ENCODE measurements at regions of chr12 and their contacts with region 1.

Region 1: GRCh38 chr12:4135919-4136605 is 137.5 kb upstream of the CCND2 start:
- DNase-seq: no peak
- H3K4me3 ChIP-seq: no peak overlapping the region
- H3K27ac ChIP-seq: no peak overlapping the region
- H3K4me1 ChIP-seq: peaks cover 11 to 36% (median 19%) of the 10 kb centered on the region in 4 experiments
- H3K27me3 ChIP-seq: no peaks in the 10 kb centered on the region
- CTCF ChIP-seq: no peak
- EP300 ChIP-seq: no peak
- POLR2A ChIP-seq: no peak
- RAD21 ChIP-seq: no peak

Region 2: DNA sequence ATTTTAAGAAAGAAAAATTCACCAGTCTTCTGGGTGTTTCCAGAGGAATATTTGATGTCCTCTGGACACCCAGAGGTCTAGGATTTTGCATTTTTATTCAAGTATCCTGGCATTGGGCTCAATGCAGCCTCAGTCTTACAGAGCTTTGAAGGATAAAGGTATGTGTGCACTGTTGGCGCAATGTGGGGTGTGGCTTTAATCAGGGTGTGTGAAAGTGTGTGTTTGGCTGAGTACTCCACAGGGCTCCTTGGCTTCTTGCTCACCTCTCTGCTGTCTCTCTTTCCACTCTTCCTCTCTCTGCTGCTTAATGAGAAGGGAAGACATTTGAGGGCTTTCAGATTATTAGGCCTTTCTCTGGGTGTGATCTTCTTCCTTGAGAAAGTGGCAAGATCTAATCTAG is 55.8 kb before region 1 on chr12:
- CTCF ChIA-PET with region 1: no interaction called
- POLR2A ChIA-PET with region 1: no interaction called
- DNase-seq: no peak
- H3K4me3 ChIP-seq: no peak overlapping the region
- H3K27ac ChIP-seq: no peak overlapping the region
- H3K4me1 ChIP-seq: no peaks in the 10 kb centered on the region
- H3K27me3 ChIP-seq: no peaks in the 10 kb centered on the region
- CTCF ChIP-seq: no peak
- EP300 ChIP-seq: no peak
- POLR2A ChIP-seq: no peak
- RAD21 ChIP-seq: no peak

Region 3: DNA sequence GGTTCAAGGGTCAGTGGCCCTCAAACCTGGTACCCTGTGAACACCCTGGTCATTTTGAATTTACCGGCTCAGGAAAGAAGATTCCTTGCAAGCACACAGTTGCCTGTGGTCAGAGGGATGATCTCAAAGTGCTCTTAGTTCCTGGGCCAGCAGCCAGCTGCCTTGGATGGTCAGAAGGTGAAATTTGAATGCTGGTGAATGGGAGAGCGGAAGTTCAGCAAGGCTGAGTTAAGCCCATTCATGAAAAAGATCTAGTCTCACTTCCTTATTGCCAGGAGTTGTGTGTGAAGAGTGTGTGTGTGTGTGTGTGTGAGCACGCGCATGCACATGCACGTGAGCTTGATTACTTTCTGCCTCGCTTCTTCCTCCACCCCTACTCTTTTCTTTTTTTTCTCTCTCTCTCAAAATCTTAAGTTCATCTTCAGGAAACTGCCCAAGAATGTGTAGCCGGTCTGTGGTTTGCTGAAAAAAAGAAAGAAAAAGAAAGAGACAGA is 18.0 kb before region 1 on chr12:
- CTCF ChIA-PET with region 1: interaction called, 22 read pairs
- POLR2A ChIA-PET with region 1: interaction called, 20 read pairs
- DNase-seq: peak in 1 of 2 experiments; percentile 32
- H3K4me3 ChIP-seq: no peak overlapping the region
- H3K27ac ChIP-seq: no peak overlapping the region
- H3K4me1 ChIP-seq: peaks cover 3 to 10% (median 6%) of the 10 kb centered on the region in 4 experiments; a peak in 6 of 7 replicates
- H3K27me3 ChIP-seq: no peaks in the 10 kb centered on the region
- CTCF ChIP-seq: no peak
- EP300 ChIP-seq: no peak
- POLR2A ChIP-seq: no peak
- RAD21 ChIP-seq: no peak

Region 4: DNA sequence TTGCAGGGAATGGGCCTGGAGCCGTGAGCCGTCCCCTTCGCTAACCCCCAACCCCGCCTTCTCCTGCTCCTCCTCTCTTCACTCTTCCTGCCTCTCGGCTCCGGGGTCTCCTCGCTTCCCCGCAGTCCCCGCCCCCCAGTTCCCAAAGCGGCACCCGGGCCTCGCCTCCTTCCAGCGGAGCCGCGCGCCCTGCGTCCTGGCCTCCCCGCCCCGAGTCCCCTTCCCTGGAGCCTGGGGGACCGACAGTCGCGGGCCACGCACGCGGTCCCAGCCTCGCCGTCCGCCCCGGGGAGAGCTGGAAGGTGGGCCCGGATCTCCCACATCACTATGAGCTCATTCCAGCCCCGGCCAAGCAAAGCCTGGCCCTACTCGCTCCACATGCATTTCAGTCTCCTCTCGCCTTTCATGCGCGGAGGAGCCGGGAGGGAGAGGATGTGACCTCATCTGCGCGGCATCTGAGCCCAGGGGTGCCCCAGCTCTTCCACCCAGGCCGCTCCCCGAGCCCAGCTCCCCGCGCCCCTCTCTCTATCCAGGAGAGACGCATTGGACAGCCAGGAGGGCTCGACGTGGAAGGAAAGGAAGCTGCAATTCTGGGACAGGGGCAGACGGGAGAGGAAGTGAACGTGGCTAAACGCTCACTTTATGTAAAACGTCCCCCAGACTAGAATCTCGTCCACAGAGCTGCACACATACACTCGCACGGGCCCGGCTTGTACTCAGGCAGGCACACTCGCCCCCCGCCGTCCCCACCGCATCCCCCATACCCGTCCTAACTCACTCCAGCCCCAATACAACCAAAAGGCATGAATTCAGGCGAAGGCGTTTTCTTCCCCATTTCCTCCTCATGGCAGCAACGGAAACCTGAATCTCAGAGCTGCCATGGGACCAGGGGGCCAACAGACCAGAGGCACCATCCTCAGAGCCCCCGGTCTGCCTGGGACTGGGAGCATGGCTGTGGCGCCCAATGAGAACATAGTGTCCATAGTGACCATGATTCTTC is 28.8 kb after region 1 on chr12:
- CTCF ChIA-PET with region 1: interaction called, 3 read pairs
- POLR2A ChIA-PET with region 1: interaction called, 20 read pairs
- DNase-seq: peak; percentile 51 to 78
- H3K4me3 ChIP-seq: peak overlapping the region; percentile 44 to 65 (median 49)
- H3K27ac ChIP-seq: peak overlapping the region; percentile 73; the same call in 1 of the 2 replicates
- H3K4me1 ChIP-seq: peaks cover 4 to 18% (median 10%) of the 10 kb centered on the region in 4 experiments
- H3K27me3 ChIP-seq: peaks cover 0 to 7% (median 5%) of the 10 kb centered on the region in 4 experiments; a peak in 4 of 7 replicates
- CTCF ChIP-seq: no peak
- EP300 ChIP-seq: no peak
- POLR2A ChIP-seq: peak in 1 of 2 experiments; percentile 59; a peak in 1 of 3 replicates
- RAD21 ChIP-seq: no peak

Measured in H1 (cell line).